Heart right ventricle (tissue), 16 donors: ENCODE measurements at regions of chr14 and their contacts with region 1.

Region 1: GRCh38 chr14:61321385-61322010 is at the start of gene PRKCH:
- DNase-seq: peak; percentile 82 to 84
- ATAC-seq: peak; percentile 76 to 92 (median 80)
- H3K4me3 ChIP-seq: peak within 1 kb of the TSS; percentile 27 to 90 (median 76)
- H3K27ac ChIP-seq: peak within 1 kb of the TSS; percentile 79 to 95 (median 91)
- H3K4me1 ChIP-seq: peaks cover 0 to 29% (median 9%) of the 10 kb centered on the region in 9 donors
- H3K27me3 ChIP-seq: peaks cover 0 to 28% (median 16%) of the 10 kb centered on the region in 7 donors
- CTCF ChIP-seq: peak in 5 of 9 donors; percentile 14 to 48 (median 19)
- total RNA-seq, gene PRKCH: 12.4 to 25.1 (median 18.3) TPM

Region 2: GRCh38 chr14:61196792-61197191 is 124.7 kb before region 1 on chr14:
- intact Hi-C with region 1: no loop called
- DNase-seq: no peak
- ATAC-seq: no peak
- H3K4me3 ChIP-seq: no peak overlapping the region
- H3K27ac ChIP-seq: no peak overlapping the region
- H3K4me1 ChIP-seq: no peaks in the 10 kb centered on the region
- H3K27me3 ChIP-seq: peaks cover 0 to 26% (median 0%) of the 10 kb centered on the region in 7 donors
- CTCF ChIP-seq: no peak

Region 3: DNA sequence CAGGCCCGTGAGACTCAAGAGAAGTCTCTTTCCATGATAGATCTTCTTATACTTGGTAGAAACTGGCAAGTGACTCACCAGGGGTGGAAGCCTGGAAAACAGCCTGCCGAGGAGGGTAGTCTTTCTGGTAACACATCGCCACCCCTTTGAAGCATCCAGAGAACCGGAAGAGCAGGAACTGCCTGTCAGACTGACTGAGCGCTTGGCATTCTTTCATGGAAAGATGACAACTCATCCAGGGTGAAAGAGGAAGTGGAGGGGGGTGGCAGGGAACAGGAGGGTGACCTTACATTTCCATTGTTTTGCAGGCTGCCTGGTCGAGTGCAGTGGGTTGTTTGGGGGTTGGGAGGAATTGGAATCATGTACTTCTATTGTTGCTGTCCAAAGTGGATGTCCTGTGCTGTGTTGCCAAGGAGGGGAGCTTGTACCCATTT is 34.4 kb after region 1 on chr14:
- intact Hi-C with region 1: loop called in 3 of 10 experiments (anchors 5 kb)
- DNase-seq: peak; percentile 23 to 80
- ATAC-seq: peak; percentile 74 to 96 (median 93)
- H3K4me3 ChIP-seq: no peak overlapping the region
- H3K27ac ChIP-seq: peak overlapping the region in 9 of 10 donors; percentile 14 to 75 (median 48)
- H3K4me1 ChIP-seq: peaks cover 0 to 57% (median 30%) of the 10 kb centered on the region in 9 donors
- H3K27me3 ChIP-seq: no peaks in the 10 kb centered on the region
- CTCF ChIP-seq: no peak

Region 4: GRCh38 chr14:61420326-61420725 is 98.8 kb after region 1 on chr14:
- intact Hi-C with region 1: loop called in 2 of 10 experiments (anchors 2 to 5 kb)
- DNase-seq: no peak
- ATAC-seq: no peak
- H3K4me3 ChIP-seq: no peak overlapping the region
- H3K27ac ChIP-seq: peak overlapping the region in 4 of 10 donors; percentile 6 to 83 (median 32)
- H3K4me1 ChIP-seq: peaks cover 0 to 76% (median 55%) of the 10 kb centered on the region in 9 donors
- H3K27me3 ChIP-seq: no peaks in the 10 kb centered on the region
- CTCF ChIP-seq: no peak

Region 5: DNA sequence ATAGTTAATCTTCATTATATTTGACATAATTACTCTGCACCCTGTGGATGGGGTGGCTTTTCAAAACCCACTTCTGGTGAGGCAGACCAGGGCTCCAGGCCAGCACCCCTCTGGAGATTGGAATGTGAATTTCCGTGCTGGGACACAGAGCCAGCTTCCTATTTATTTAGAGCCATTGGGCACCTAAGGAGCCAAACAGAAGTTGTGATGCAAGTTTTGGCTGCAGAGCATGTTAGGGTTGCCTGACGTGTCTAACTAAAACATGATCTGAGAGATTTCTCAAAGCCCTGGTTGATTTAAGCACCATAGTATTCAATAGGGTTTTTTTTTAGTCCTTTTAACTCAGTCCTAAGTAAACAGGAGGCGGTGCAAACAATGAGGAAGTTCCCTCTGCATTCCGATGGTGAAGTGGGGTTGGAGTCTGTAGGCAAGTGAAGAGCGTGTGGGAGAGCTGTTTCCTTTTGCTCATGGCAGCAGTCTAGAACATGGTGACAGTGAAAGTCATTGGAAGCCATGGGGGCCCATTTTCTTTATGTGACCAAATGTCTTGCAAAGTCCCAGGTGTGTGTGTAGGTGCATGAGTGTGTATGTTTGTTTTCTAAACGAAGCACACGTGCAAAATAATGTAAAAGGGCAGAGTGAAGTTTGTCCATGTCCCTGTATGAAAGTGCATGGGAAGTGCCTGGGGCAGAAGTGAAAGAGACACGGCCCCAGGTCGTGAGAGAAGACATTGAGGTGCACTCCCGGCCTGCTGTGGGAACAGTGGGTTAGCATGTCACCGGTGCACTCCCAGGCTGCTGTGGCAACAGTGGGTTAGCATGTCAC is 117.6 kb after region 1 on chr14:
- intact Hi-C with region 1: loop called in 3 of 10 experiments (anchors 5 to 10 kb)
- DNase-seq: peak; percentile 28 to 45
- ATAC-seq: peak; percentile 45 to 83 (median 81)
- H3K4me3 ChIP-seq: peak overlapping the region in 3 of 10 donors; percentile 12 to 33 (median 15)
- H3K27ac ChIP-seq: peak overlapping the region in 8 of 10 donors; percentile 11 to 67 (median 40)
- H3K4me1 ChIP-seq: peaks cover 0 to 68% (median 50%) of the 10 kb centered on the region in 9 donors
- H3K27me3 ChIP-seq: no peaks in the 10 kb centered on the region
- CTCF ChIP-seq: no peak

Region 6: GRCh38 chr14:61456720-61457119 is 135.2 kb after region 1 on chr14:
- intact Hi-C with region 1: loop called in 5 of 10 experiments (anchors 5 to 10 kb)
- DNase-seq: peak; percentile 58 to 91
- ATAC-seq: peak; percentile 61 to 82 (median 76)
- H3K4me3 ChIP-seq: no peak overlapping the region
- H3K27ac ChIP-seq: no peak overlapping the region
- H3K4me1 ChIP-seq: peaks cover 0 to 53% (median 27%) of the 10 kb centered on the region in 9 donors
- H3K27me3 ChIP-seq: no peaks in the 10 kb centered on the region
- CTCF ChIP-seq: peak; percentile 70 to 93 (median 90)